Activated CD8-positive, alpha-beta T cell treated with anti-CD3 and anti-CD28 coated beads, Interleukin-2, amount 10 ng/mL, durations not matched to agents 7 days and 5 days (primary cell): ENCODE measurements at regions of chr19 and their contacts with region 1.

Region 1: GRCh38 chr19:16584248-16585141 is 12.3 kb upstream of the SLC35E1 start:
- DNase-seq: peak; percentile 94
- ATAC-seq: peak; percentile 85
- H3K4me3 Mint-ChIP-seq: peak overlapping the region; percentile 78
- H3K27ac Mint-ChIP-seq: peak overlapping the region; percentile 95
- H3K4me1 Mint-ChIP-seq: peaks cover 90% of the 10 kb centered on the region
- H3K27me3 Mint-ChIP-seq: no peaks in the 10 kb centered on the region

Region 2: GRCh38 chr19:16495982-16496612 is 88.4 kb before region 1 on chr19 and contains the starts of genes C19orf44 and CALR3:
- CTCF ChIA-PET with region 1: no interaction called
- POLR2A ChIA-PET with region 1: no interaction called
- DNase-seq: peak; percentile 99
- ATAC-seq: peak; percentile 99
- H3K4me3 Mint-ChIP-seq: peak within 1 kb of the TSS; percentile 96
- H3K27ac Mint-ChIP-seq: peak within 1 kb of the TSS; percentile 89
- H3K4me1 Mint-ChIP-seq: peaks cover 9% of the 10 kb centered on the region
- H3K27me3 Mint-ChIP-seq: no peaks in the 10 kb centered on the region
- total RNA-seq, gene C19orf44: 3.0 to 3.1 TPM
- total RNA-seq, gene CALR3: not detected

Region 3: DNA sequence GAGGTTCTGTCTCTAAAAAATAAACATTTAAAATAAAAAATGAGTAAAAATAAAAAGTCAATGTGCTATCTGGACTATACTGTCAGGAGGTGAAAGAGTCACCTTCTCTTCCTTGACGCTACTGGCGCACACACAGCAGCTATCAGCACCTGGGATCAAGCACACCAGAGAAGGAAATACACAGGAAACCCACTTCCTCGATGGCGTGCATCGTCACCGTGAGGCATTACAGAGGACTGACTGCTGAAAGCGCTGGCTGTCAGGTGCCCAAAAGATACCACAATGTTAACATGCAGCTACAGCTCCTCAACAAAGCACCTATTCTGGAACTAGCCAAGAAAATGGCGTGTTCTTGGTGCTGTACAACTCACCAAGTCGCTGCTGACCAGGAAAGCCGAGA is 18.3 kb before region 1 on chr19:
- CTCF ChIA-PET with region 1: interaction called, 3 read pairs
- POLR2A ChIA-PET with region 1: interaction called, 11 read pairs
- DNase-seq: peak; percentile 92
- ATAC-seq: peak; percentile 99
- H3K4me3 Mint-ChIP-seq: peak overlapping the region; percentile 74
- H3K27ac Mint-ChIP-seq: peak overlapping the region; percentile 99
- H3K4me1 Mint-ChIP-seq: peaks cover 55% of the 10 kb centered on the region
- H3K27me3 Mint-ChIP-seq: no peaks in the 10 kb centered on the region

Region 4: GRCh38 chr19:16572332-16573211 is 11.9 kb before region 1 on chr19 and contains the start of gene SLC35E1:
- CTCF ChIA-PET with region 1: interaction called, 15 read pairs
- POLR2A ChIA-PET with region 1: interaction called, 35 read pairs
- DNase-seq: peak; percentile 93
- ATAC-seq: peak; percentile 90
- H3K4me3 Mint-ChIP-seq: peak within 1 kb of the TSS; percentile 100
- H3K27ac Mint-ChIP-seq: peak within 1 kb of the TSS; percentile 100
- H3K4me1 Mint-ChIP-seq: peaks cover 66% of the 10 kb centered on the region
- H3K27me3 Mint-ChIP-seq: no peaks in the 10 kb centered on the region
- total RNA-seq, gene SLC35E1: 55.6 to 61.9 TPM